Transverse colon (tissue), 4 donors: ENCODE measurements at regions of chr4 and their contacts with region 1.

Region 1: DNA sequence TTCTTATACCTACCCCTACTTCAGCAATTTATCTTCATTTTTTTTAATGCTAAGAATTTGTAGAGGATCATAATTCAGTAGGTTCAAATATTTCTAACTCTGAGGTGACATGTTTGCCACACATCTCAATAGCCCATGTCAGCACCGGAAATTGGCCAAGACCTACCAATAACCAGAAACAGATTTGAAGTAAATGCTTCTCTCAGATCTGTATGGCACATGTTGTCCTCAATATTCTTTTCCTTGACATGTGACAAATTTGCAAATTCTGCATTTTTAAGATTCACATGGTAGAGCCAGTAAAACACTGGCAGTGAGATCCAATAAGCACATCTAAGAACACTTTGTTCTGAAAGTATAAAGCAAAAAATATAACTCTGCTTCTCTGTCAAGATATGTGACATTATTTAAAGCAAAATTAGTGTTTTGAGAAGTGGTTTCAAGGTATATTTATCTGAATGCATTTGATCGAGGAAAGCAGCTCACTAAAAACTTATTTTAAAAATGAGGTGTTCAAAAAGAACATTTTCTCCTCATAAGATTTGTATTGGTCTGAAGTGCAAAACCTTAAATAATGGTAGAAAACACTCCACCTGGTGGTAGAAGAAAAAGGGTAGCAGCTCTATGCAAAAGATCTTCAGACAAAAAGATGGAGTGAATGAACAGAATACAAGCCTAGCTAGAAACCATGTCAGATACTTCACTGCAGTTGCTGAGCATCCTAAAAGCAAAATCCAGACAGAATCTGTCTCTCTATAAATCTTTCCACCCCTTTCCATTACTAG is 513.8 kb upstream of the FAM241A start:
- DNase-seq: no peak
- H3K4me3 ChIP-seq: no peak overlapping the region
- H3K27ac ChIP-seq: no peak overlapping the region
- H3K4me1 ChIP-seq: no peaks in the 10 kb centered on the region
- H3K27me3 ChIP-seq: no peaks in the 10 kb centered on the region
- CTCF ChIP-seq: peak in 4 of 5 experiments; percentile 11 to 27 (median 22)
- EP300 ChIP-seq: no peak
- POLR2A ChIP-seq: no peak

Region 2: DNA sequence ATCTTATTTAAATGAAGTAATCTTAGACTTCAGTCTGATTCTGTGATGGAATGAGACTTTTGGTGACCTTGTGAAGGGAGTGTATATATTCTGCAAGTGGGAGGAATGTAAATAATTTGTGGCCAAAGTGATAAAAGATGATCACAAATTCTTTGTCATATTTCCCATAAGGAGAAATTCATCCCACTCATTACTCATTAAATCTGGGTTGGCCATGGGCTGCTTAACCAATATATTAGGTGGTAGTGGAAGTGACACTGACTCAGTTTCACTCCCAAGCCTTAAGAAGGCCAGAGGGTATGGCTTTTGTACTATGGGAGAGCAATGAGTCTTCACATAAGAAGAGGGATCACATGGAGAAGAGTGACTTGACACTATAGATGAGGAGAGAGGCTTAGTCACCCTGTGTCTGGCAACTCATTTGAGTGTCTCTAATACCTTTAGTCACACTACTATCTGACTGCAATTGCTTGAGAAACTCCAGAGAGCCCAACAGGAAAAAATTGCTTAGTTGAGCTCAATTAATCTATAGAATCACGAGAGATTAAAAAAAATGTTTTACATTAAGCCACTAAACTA is 600.3 kb before region 1 on chr4:
- in situ Hi-C with region 1: no loop called
- intact Hi-C with region 1: no loop called
- DNase-seq: no peak
- H3K4me3 ChIP-seq: no peak overlapping the region
- H3K27ac ChIP-seq: no peak overlapping the region
- H3K4me1 ChIP-seq: no peaks in the 10 kb centered on the region
- H3K27me3 ChIP-seq: no peaks in the 10 kb centered on the region
- CTCF ChIP-seq: no peak
- EP300 ChIP-seq: no peak
- POLR2A ChIP-seq: no peak

Region 3: DNA sequence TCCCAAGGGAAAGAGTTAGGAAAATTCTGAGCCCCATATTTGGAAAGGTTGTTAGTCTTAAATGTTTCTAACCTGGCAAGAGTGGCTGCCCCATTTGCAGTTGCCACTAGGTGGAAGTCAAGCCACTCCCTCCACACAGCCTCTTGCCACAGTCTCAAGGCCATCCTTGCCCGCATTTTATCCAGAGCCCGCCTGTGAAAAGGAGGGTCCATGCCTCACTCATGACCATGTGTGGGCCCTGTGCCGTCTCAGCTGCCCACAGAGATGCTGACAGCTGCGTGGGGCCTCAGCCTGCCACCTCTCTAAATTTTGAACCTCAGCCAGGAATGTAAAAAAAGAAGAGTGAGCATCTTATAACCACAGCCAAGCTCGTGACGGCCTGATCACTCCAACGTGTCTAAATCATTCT is 312.4 kb after region 1 on chr4:
- in situ Hi-C with region 1: loop called in 2 of 4 experiments (anchors 10 to 25 kb)
- intact Hi-C with region 1: no loop called
- DNase-seq: peak; percentile 61
- H3K4me3 ChIP-seq: no peak overlapping the region
- H3K27ac ChIP-seq: no peak overlapping the region
- H3K4me1 ChIP-seq: no peaks in the 10 kb centered on the region
- H3K27me3 ChIP-seq: no peaks in the 10 kb centered on the region
- CTCF ChIP-seq: peak; percentile 53 to 80 (median 60)
- EP300 ChIP-seq: no peak
- POLR2A ChIP-seq: no peak